IMR-90 (cell line): ENCODE measurements at regions of chr6 and their contacts with region 1.

Region 1: GRCh38 chr6:46113353-46113752 is 16.4 kb upstream of the ENPP4 start:
- DNase-seq: no peak
- ATAC-seq: no peak
- H3K4me3 ChIP-seq: no peak overlapping the region
- H3K27ac ChIP-seq: no peak overlapping the region
- H3K4me1 ChIP-seq: no peaks in the 10 kb centered on the region
- H3K27me3 ChIP-seq: no peaks in the 10 kb centered on the region
- CTCF ChIP-seq: no peak
- POLR2A ChIP-seq: no peak
- RAD21 ChIP-seq: no peak

Region 2: DNA sequence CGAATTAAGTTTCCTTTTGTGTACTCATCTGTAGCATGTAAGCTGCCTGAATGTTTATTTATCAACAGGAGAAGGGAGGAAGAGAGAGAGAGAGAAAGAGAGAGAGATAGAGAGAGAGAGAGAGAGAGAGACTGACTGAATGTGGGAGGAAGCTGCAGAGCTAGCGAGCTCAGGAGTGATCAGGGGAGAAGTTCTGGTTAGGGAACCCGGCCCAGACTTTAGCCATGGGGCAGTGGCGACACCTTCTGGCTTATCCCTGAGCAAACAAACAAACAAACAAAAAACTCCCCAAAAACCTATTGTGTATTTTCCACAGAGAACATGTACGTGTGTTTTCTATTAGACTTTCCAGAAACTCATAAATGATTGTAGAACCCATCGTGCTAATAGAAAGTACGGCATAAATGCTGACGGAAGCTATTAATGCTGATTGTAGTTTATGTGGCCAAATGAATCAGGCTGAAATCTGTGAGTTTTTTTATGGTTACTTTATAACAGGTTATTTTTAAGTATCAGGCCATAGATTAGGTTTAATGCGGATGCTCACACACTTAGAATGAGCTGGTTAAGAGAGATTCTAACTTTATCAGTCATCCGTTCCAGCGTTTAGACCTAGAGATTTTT is 190.5 kb before region 1 on chr6:
- CTCF ChIA-PET with region 1: no interaction called
- POLR2A ChIA-PET with region 1: no interaction called
- dilution Hi-C with region 1: no loop called
- in situ Hi-C with region 1: no loop called
- intact Hi-C with region 1: no loop called
- DNase-seq: peak; percentile 61
- ATAC-seq: peak; percentile 78
- H3K4me3 ChIP-seq: no peak overlapping the region
- H3K27ac ChIP-seq: no peak overlapping the region
- H3K4me1 ChIP-seq: peaks cover 2% of the 10 kb centered on the region; the same call in 1 of the 2 replicates
- H3K27me3 ChIP-seq: peaks cover 4% of the 10 kb centered on the region
- CTCF ChIP-seq: peak; percentile 77
- POLR2A ChIP-seq: no peak
- RAD21 ChIP-seq: peak; percentile 91

Region 3: DNA sequence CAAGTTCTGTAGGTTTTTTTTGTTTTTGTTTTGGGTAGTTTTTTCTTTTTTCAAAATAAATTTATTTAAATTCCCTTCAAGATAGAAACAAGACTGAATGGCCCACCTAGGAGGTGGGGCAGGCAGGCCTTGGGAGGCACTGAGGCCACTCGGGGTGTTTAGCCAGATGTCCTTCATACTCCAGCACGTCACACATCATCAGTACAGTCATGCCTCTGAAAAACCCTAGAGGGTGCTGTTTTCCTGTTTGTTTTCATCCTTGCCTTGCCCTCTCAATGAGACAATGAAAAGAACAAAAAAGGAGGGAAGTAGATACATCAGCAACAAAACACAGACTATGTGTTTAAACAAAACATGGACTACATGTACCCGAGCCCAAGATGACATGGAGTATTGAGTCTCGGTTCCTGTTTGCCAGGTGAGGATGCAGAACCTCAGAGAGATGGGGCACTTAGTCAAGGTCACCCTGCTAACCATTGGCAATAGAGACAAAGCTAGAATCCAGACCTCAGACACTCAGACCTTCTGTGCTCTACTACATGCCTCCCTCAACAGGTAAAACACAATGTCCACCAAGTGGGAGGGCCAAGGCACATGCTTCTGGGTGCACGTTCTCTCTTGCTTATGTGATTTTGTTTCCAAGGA is 70.9 kb before region 1 on chr6:
- CTCF ChIA-PET with region 1: no interaction called
- POLR2A ChIA-PET with region 1: no interaction called
- dilution Hi-C with region 1: no loop called
- in situ Hi-C with region 1: no loop called
- intact Hi-C with region 1: no loop called
- DNase-seq: peak; percentile 11
- ATAC-seq: no peak; the same call in 1 of the 2 replicates
- H3K4me3 ChIP-seq: no peak overlapping the region
- H3K27ac ChIP-seq: no peak overlapping the region
- H3K4me1 ChIP-seq: no peaks in the 10 kb centered on the region
- H3K27me3 ChIP-seq: no peaks in the 10 kb centered on the region
- CTCF ChIP-seq: peak; percentile 28; the same call in 1 of the 2 replicates
- POLR2A ChIP-seq: no peak
- RAD21 ChIP-seq: no peak

Region 4: DNA sequence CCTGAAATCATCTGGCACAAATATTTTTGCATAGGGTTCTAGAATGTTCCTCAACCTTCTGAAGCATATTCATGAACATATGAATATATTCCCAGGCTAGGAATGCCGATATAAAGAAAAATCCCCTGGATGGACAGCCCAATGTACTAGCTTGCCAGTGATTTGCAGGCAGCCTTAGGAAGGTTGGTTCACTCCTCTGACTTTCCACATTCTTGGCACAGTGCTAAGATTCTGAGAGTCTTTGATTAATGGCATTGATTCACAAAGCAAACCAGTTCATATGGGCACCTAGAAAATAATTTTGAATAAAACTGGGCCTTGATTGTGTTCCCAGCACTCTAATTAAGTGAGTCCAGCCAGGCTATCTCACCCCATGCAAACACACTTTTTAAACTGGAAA is 40.5 kb before region 1 on chr6:
- CTCF ChIA-PET with region 1: no interaction called
- POLR2A ChIA-PET with region 1: no interaction called
- dilution Hi-C with region 1: no loop called
- in situ Hi-C with region 1: no loop called
- intact Hi-C with region 1: loop called (anchors 1 kb)
- DNase-seq: no peak
- ATAC-seq: no peak
- H3K4me3 ChIP-seq: no peak overlapping the region
- H3K27ac ChIP-seq: no peak overlapping the region
- H3K4me1 ChIP-seq: no peaks in the 10 kb centered on the region
- H3K27me3 ChIP-seq: no peaks in the 10 kb centered on the region
- CTCF ChIP-seq: no peak
- POLR2A ChIP-seq: no peak
- RAD21 ChIP-seq: no peak